HCT116 (cell line): ENCODE measurements at regions of chr11 and their contacts with region 1.

Region 1: GRCh38 chr11:65003282-65003681 is 6.5 kb upstream of the BATF2 start:
- DNase-seq: no peak
- ATAC-seq: no peak
- H3K4me3 ChIP-seq: no peak overlapping the region
- H3K27ac ChIP-seq: no peak overlapping the region
- H3K4me1 ChIP-seq: peaks cover 16 to 42% of the 10 kb centered on the region in 2 experiments
- H3K27me3 ChIP-seq: no peaks in the 10 kb centered on the region
- CTCF ChIP-seq: no peak
- POLR2A ChIP-seq: no peak
- RAD21 ChIP-seq: no peak

Region 2: DNA sequence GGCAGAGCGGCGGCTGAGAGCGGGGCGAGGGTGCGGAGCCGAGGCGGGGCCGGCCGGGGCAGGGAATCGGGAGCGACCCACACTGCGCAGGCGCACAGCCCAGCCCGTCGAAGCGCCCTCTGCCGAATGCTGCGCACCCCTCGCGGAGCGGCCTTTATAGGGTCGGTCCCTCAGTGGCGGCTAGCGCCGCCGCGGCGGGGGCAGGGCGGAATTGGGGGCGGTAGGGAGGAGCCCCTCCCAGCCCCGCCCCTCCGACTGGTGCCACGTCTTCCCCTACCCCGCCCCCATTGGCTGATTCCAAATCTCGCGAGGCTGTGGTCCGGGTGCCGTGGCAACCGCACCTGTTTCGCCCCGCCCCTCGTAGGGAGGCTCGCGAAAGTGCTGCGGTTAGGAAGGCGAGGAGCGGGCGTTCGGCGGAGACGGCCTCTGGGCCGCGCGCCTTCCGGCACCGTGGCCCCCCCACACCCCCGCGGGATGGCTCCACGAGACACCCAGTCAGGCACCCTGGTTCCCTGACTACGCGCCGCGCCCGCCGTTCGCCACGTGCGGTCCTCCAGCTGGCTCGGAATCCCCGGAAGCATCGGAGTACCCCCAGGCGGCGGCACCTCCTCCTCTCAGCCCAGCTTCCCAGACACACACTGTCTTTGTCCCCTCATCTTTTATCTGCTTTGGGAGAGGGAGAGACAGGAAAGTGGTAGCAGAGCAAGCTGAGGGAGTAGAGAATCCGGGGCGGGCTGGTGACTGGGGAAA is 124.6 kb before region 1 on chr11 and contains the start of gene EHD1:
- CTCF ChIA-PET with region 1: no interaction called
- POLR2A ChIA-PET with region 1: no interaction called
- RAD21 ChIA-PET with region 1: no interaction called
- intact Hi-C with region 1: no loop called
- DNase-seq: peak; percentile 92
- ATAC-seq: peak; percentile 88
- H3K4me3 ChIP-seq: peak within 1 kb of the TSS; percentile 95 to 99
- H3K27ac ChIP-seq: peak within 1 kb of the TSS; percentile 84
- H3K4me1 ChIP-seq: peaks cover 22 to 33% of the 10 kb centered on the region in 2 experiments
- H3K27me3 ChIP-seq: no peaks in the 10 kb centered on the region
- CTCF ChIP-seq: peak; percentile 34 to 52 (median 36); a peak in 5 of 6 replicates
- POLR2A ChIP-seq: peak; percentile 89
- RAD21 ChIP-seq: no peak; the same call in none of the 2 replicates
- total RNA-seq, gene EHD1: 48.1 TPM

Region 3: DNA sequence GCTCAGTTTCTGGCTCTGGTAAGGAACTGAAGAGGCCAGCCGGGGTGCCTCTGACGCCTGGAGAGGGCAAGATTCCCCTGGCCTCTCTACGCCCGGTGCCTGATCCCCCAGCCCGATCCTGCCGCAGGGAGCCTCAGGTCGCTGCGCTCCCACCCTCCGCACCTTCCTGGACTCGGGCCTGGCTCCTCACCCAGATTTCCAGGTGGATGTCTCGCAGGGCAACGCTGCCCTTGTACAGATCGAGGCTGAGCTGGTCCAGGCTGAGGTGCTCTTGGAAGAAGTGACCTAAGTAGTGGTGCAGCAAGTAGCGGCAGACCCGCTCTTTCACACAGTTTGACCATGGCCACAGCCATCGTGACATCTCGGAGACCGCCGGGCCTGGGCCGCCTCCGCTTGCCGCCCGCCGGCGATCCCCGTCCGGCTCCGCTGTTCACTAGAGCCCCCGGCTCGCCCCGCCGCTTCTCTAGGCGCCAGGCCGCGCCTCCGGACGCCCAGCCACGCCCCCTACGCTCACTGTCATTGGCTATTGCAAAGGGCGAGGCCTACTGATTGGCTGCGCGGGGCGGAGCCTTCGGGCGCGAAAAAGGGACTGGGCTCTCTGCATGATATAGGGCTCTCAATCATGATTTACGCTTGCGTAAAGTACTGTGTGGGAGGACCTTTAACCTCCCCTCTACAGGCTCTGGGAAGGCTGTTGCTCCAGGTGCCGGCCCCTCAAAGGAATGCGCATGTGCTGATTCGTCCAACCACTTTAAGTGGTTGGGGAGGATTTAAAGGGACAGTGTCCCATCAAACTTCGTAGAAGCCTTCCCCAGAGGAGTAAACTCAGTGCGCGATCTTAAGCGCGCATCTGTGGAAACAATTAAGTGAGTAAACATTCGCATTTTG is 86.3 kb before region 1 on chr11 and contains the start of gene ATG2A:
- CTCF ChIA-PET with region 1: no interaction called
- POLR2A ChIA-PET with region 1: no interaction called
- RAD21 ChIA-PET with region 1: no interaction called
- intact Hi-C with region 1: loop called (anchors 2 kb)
- DNase-seq: peak; percentile 99
- ATAC-seq: peak; percentile 97
- H3K4me3 ChIP-seq: peak within 1 kb of the TSS; percentile 82 to 84
- H3K27ac ChIP-seq: peak within 1 kb of the TSS; percentile 69
- H3K4me1 ChIP-seq: peaks cover 16 to 29% of the 10 kb centered on the region in 2 experiments
- H3K27me3 ChIP-seq: no peaks in the 10 kb centered on the region
- CTCF ChIP-seq: no peak
- POLR2A ChIP-seq: peak; percentile 37
- RAD21 ChIP-seq: no peak
- total RNA-seq, gene ATG2A: 24.7 TPM

Region 4: DNA sequence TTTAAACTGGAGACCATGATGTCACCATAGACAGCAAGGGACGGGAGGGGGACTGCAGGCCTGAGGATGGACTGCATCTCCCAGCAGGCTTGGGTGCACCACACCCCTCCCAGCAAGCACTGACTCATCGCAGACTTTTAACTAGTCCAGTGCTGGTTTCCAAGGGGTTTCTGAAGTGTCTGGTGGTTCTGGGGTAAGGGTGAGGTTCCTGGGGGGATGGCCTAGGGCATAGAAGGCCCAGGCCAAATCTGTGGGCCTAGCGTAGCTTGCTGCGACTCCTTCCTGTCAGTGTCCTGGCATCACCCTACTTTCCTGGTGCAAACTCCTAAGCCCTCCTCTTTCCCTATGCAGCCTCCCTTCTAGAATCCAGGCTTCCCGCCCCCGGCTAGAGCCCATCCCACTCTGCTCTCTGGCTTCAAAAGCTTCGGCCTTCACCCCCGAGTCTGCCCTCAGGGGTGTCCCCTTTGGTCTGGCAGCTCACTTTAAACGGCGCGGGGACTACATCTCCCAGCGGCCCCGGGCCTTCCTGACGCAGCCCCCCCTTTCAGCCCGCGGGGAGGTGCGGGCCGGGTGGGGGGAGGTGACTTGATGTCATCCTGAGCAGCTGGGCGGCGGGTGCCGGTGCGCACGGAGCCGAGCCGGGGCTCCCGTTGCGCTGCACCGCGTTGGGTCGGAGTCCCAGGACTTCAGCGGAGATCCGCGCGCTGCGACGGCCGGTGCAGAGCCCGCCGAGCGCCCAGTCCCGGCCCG is 79.0 kb before region 1 on chr11 and contains the start of gene PPP2R5B:
- CTCF ChIA-PET with region 1: no interaction called
- POLR2A ChIA-PET with region 1: interaction called, 4 read pairs
- RAD21 ChIA-PET with region 1: no interaction called
- intact Hi-C with region 1: loop called (anchors 1 kb)
- DNase-seq: peak; percentile 85
- ATAC-seq: peak; percentile 94
- H3K4me3 ChIP-seq: peak within 1 kb of the TSS; percentile 73 to 80
- H3K27ac ChIP-seq: peak within 1 kb of the TSS; percentile 85
- H3K4me1 ChIP-seq: peaks cover 4 to 18% of the 10 kb centered on the region in 2 experiments
- H3K27me3 ChIP-seq: no peaks in the 10 kb centered on the region
- CTCF ChIP-seq: no peak
- POLR2A ChIP-seq: no peak
- RAD21 ChIP-seq: no peak
- total RNA-seq, gene PPP2R5B: 10.9 TPM